ENCODE measurements at regions of chrX and their contacts with region 1.

Region 1: GRCh38 chrX:40153335-40154249 is 55.8 kb upstream of the BCOR start:
- DNase-seq: peak; percentile 89
- ATAC-seq: peak; percentile 80
- H3K4me3 Mint-ChIP-seq: peak overlapping the region; percentile 76
- H3K27ac Mint-ChIP-seq: peak overlapping the region; percentile 81
- H3K4me1 Mint-ChIP-seq: peaks cover 17% of the 10 kb centered on the region
- H3K27me3 Mint-ChIP-seq: no peaks in the 10 kb centered on the region
- CTCF ChIP-seq: no peak

Region 2: DNA sequence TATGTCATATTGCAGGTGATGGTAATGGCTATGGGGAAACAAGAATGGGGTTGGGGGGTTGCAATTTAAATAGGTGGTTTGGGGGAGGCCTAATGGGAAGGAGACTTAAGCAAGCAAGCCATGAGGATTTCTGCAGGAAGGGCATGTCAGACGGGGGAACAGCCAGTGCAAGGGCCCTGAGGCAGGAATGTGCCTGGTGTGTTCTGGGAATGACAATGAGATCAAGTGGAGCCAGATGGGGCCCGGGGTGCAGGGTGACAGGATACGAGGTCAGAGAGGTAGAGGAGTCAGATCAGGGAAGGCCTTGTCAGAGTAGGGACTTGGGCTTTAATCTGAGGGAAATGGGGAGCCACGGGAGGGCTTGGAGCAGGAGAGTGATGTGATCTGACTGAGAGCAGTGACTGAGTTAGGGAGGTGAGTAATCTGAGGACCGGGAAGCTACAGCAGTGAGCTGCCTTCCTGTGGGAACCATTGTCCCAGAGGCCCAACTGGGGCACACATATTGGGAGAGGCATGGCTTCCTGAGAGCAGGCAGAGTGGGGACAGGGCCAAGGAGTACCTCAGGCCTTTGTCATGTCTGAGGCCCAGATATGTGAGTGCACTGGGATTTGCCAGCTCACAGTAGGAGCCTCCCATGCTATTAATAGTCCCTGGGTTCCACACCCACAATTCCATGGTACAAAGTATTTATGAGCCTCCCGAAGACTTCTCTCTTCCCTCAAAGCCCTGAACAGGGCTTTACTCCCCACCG is 195.6 kb before region 1 on chrX:
- CTCF ChIA-PET with region 1: no interaction called
- POLR2A ChIA-PET with region 1: no interaction called
- intact Hi-C with region 1: no loop called
- DNase-seq: no peak
- ATAC-seq: no peak
- H3K4me3 Mint-ChIP-seq: no peak overlapping the region
- H3K27ac Mint-ChIP-seq: no peak overlapping the region
- H3K4me1 Mint-ChIP-seq: peaks cover 4% of the 10 kb centered on the region
- H3K27me3 Mint-ChIP-seq: no peaks in the 10 kb centered on the region
- CTCF ChIP-seq: no peak

Region 3: GRCh38 chrX:40105835-40106675 is 47.5 kb before region 1 on chrX:
- CTCF ChIA-PET with region 1: interaction called, 4 read pairs
- POLR2A ChIA-PET with region 1: interaction called, 10 read pairs
- intact Hi-C with region 1: no loop called
- DNase-seq: peak; percentile 80
- ATAC-seq: peak; percentile 32
- H3K4me3 Mint-ChIP-seq: peak overlapping the region; percentile 75
- H3K27ac Mint-ChIP-seq: peak overlapping the region; percentile 92
- H3K4me1 Mint-ChIP-seq: peaks cover 6% of the 10 kb centered on the region
- H3K27me3 Mint-ChIP-seq: peaks cover 2% of the 10 kb centered on the region
- CTCF ChIP-seq: no peak

Region 4: DNA sequence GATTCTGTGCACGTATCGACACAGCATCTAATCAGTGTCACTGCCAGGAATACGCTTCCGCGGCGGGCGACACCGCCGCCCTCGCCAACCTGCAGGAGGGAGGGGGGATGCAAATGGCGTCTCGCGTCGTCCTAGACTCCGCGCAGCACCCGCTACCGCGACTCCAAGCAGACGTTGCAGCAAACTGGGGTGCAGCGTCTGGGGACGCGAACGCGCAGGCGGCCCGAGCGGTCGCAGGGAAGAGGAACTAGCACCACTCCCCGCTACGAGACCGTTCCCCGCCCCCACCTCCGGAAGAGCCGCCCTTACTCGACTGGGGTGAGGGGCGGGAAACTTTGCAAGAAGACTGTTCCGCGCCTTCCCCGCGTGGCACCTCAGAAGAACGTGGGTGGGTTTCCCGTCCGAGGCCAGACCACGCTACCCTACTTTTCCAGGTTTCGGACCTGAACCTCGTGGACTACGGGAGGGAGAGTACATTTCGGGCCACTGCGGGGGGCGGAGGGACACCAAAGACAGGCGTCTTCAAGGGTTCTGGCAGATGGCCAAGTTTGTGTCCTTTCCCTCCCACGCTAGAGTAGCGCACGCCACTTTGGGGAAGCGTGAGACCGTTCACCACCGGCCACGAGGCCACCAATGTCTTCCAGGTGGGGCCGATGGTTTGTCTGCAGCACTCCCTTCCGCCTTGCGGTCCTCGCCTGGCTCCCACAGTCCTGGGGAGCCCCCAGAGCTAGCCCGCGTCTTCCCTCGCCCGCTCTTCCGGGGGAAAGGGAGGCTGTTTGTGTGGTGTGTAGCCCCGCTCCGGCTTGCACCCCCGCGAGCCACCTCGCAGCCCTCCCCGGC is 22.1 kb after region 1 on chrX:
- CTCF ChIA-PET with region 1: no interaction called
- POLR2A ChIA-PET with region 1: interaction called, 11 read pairs
- intact Hi-C with region 1: no loop called
- DNase-seq: peak; percentile 80
- ATAC-seq: peak; percentile 29
- H3K4me3 Mint-ChIP-seq: peak overlapping the region; percentile 83
- H3K27ac Mint-ChIP-seq: peak overlapping the region; percentile 97
- H3K4me1 Mint-ChIP-seq: peaks cover 22% of the 10 kb centered on the region
- H3K27me3 Mint-ChIP-seq: no peaks in the 10 kb centered on the region
- CTCF ChIP-seq: no peak

Region 5: DNA sequence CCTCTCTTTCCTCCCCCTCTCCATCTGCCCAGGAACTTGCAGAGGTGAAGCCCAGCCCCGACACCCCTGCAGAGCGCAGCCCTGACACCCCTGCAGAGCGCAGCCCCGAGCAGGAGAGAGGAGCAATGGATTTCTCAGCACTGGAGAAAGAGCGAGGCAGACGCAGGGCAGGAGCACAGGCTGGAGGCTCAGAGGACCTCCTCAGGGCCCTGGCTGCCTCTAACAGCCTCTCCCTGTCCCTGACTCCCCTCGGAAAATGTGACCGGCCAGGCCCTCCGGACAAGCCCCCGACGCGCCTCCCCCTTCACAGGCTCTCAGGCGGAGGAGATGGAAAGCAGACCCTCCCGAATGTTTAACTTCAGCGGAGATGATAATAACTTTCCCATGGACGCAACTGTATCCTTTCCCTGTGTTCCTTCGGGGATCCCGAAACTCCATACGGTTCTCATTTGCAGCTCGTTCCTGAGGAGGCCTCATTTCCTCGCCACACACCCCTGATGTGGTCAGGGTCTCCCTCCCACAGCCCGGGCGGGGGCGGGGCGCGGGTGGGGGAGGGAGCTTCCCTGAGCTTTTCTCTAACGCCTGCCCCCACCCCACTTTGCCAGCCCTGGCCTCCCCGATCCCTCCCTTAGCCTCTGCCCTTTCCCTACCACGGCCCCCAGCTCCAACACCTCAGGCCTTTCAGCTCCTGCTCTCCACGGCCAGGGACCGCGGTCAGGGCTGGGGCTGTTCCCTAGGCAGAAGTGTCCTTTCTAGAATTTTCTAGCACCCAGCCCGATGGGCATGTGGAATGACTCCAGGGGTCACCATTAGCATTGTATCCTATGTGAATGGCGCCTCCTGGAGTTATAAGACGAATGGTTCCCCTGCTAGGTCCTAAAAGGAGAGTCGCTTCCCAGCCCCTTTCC is 145.2 kb after region 1 on chrX:
- CTCF ChIA-PET with region 1: no interaction called
- POLR2A ChIA-PET with region 1: no interaction called
- intact Hi-C with region 1: no loop called
- DNase-seq: no peak
- ATAC-seq: no peak
- H3K4me3 Mint-ChIP-seq: no peak overlapping the region
- H3K27ac Mint-ChIP-seq: no peak overlapping the region
- H3K4me1 Mint-ChIP-seq: peaks cover 20% of the 10 kb centered on the region
- H3K27me3 Mint-ChIP-seq: peaks cover 2% of the 10 kb centered on the region
- CTCF ChIP-seq: no peak